B cell (primary cell): ENCODE measurements at regions of chr7 and their contacts with region 1.

Region 1: DNA sequence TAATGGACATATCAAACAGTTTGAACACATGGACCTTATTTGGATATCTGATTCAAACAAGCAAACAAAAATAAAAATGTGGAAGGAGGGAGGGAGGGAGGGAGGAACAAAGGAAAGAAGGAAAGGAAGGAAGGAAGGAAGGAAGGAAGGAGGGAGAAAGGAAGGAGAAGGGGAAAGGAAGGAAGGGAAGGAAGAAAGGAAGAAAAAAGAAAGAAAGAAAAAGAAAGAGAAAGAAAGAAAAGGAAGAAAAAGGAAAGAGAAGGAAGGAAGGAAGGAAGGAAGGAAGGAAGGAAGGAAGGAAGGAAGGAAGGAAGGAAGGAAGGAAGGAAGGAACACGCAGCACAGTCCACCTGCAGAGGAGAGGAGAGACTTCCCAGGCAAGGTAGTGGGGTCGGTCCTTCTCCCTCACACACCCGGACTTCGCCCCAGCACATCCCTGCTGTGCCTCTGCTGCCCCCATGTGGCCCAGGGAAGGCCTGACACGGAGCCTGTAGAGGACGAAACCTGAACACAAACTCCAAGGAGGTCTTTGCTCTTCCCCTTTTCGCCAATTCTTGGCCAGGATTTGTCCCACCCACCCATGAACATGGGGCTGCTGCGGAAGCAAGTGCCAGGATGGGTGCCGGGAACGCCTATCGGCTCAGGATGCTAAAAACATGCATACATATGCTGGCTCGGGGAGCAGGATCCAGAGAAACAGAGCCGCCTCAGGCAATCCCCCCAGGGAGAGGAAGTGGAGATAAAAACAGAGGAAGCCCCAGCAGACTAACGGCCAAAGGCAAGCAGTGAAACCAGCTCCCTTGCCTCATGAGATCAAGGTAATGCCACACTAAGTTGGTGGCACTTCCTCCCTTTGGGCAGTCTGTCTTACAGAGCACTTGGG is 52.3 kb upstream of the DGKI start:
- DNase-seq: peak; percentile 78
- ATAC-seq: peak; percentile 87
- H3K4me3 ChIP-seq: peak overlapping the region in 3 of 5 experiments; percentile 37 to 46 (median 45)
- H3K4me3 Mint-ChIP-seq: peak overlapping the region; percentile 81
- H3K27ac ChIP-seq: peak overlapping the region; percentile 34 to 59
- H3K27ac Mint-ChIP-seq: peak overlapping the region; percentile 83
- H3K4me1 ChIP-seq: peaks cover 14 to 18% of the 10 kb centered on the region in 2 donors
- H3K4me1 Mint-ChIP-seq: peaks cover 27% of the 10 kb centered on the region
- H3K27me3 ChIP-seq: no peaks in the 10 kb centered on the region
- H3K27me3 Mint-ChIP-seq: no peaks in the 10 kb centered on the region
- CTCF ChIP-seq: peak; percentile 92

Region 2: DNA sequence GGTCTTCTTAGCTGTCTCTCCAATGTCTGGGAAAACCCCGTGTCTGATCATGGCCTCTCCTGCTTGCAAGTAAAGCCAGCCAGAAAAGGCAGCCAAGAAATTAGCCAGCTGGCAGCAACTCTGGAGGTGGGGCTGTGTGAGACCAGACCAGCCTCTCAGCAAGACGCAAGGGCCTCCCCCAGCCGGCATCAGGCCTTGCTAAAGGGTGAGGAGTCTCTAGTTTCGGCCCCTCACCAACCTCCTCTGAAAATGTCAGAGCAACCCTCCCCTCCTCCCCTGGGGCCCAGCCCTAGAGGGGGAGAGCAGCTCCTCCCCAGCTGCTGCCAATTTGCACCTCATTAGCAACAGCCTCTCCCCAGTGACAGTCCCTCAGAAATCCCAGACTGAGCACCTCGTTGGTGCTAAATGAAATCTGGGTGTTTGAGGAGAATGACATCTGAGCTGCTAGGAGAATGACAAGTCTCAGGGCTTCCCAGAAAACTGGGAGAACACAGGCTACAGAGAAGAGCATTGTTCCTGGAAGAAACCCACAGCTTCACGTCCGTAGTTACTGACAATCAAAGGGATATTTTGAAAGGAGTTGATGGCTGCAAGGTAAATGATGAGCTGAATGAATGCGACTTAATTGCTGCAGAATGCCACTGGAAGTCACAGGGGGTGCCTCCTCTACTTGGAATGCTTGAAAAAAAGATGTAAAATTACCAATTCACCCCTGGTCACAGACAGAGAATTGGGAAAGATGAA is 78.2 kb before region 1 on chr7:
- CTCF ChIA-PET with region 1: no interaction called
- POLR2A ChIA-PET with region 1: no interaction called
- intact Hi-C with region 1: no loop called
- DNase-seq: no peak
- ATAC-seq: no peak
- H3K4me3 ChIP-seq: no peak overlapping the region
- H3K4me3 Mint-ChIP-seq: no peak overlapping the region
- H3K27ac ChIP-seq: no peak overlapping the region
- H3K27ac Mint-ChIP-seq: no peak overlapping the region
- H3K4me1 ChIP-seq: no peaks in the 10 kb centered on the region
- H3K4me1 Mint-ChIP-seq: no peaks in the 10 kb centered on the region
- H3K27me3 ChIP-seq: no peaks in the 10 kb centered on the region
- H3K27me3 Mint-ChIP-seq: peaks cover 13% of the 10 kb centered on the region
- CTCF ChIP-seq: no peak

Region 3: GRCh38 chr7:137985253-137985896 is 86.3 kb after region 1 on chr7:
- CTCF ChIA-PET with region 1: interaction called, 12 read pairs
- POLR2A ChIA-PET with region 1: no interaction called
- intact Hi-C with region 1: no loop called
- DNase-seq: peak; percentile 71
- ATAC-seq: peak; percentile 73
- H3K4me3 ChIP-seq: peak overlapping the region in 1 of 5 experiments; percentile 31
- H3K4me3 Mint-ChIP-seq: peak overlapping the region; percentile 58
- H3K27ac ChIP-seq: peak overlapping the region; percentile 89 to 94
- H3K27ac Mint-ChIP-seq: no peak overlapping the region
- H3K4me1 ChIP-seq: peaks cover 75 to 84% of the 10 kb centered on the region in 2 donors
- H3K4me1 Mint-ChIP-seq: peaks cover 30% of the 10 kb centered on the region
- H3K27me3 ChIP-seq: no peaks in the 10 kb centered on the region
- H3K27me3 Mint-ChIP-seq: no peaks in the 10 kb centered on the region
- CTCF ChIP-seq: no peak

Region 4: DNA sequence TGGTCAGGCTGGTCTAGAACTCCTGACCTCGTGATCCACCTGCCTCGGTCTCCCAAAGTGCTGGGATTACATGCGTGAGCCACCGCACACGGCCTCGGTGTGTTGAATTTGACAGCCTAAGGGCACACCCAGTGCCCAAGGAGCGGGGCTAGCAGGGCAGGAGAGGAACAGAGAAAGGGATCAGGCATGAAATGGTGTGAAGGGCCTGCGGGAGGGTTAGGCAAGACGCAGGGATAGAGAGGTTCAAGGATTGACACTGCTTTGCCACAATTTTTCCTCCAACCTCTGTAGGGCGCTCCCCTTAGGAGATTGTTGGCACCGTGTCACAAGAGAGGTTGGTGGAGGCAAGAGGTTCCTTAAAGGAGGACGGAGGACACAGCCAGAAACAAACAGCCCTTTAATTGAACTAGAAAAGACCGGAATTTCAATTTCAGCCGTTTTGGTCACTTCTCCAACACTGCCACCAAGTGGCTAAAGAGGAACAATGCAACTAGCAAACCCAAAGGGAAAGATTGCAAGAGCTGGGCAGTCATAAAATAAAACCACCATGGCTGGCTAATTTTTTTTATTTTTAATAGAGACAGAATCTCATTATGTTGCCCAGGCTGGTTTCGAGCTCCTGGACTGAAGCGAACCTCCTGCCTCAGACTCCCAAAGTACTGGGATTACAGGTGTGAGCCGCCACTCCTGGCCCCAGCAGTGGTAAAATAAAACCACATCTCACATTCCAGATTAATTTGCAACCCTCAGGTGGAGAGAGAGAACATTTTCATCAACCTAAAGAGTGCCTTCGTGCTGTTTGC is 109.7 kb after region 1 on chr7:
- CTCF ChIA-PET with region 1: interaction called, 385 read pairs
- POLR2A ChIA-PET with region 1: no interaction called
- intact Hi-C with region 1: loop called (anchors 1 kb)
- DNase-seq: peak; percentile 70
- ATAC-seq: peak; percentile 64
- H3K4me3 ChIP-seq: no peak overlapping the region
- H3K4me3 Mint-ChIP-seq: no peak overlapping the region
- H3K27ac ChIP-seq: no peak overlapping the region
- H3K27ac Mint-ChIP-seq: no peak overlapping the region
- H3K4me1 ChIP-seq: peaks cover 5 to 6% of the 10 kb centered on the region in 2 donors
- H3K4me1 Mint-ChIP-seq: peaks cover 4% of the 10 kb centered on the region
- H3K27me3 ChIP-seq: no peaks in the 10 kb centered on the region
- H3K27me3 Mint-ChIP-seq: peaks cover 3% of the 10 kb centered on the region
- CTCF ChIP-seq: peak; percentile 86

Region 5: GRCh38 chr7:138161600-138162081 is 262.6 kb after region 1 on chr7:
- CTCF ChIA-PET with region 1: interaction called, 6 read pairs
- POLR2A ChIA-PET with region 1: no interaction called
- intact Hi-C with region 1: loop called (anchors 1 kb)
- DNase-seq: peak; percentile 86
- ATAC-seq: peak; percentile 98
- H3K4me3 ChIP-seq: no peak overlapping the region
- H3K4me3 Mint-ChIP-seq: no peak overlapping the region
- H3K27ac ChIP-seq: no peak overlapping the region
- H3K27ac Mint-ChIP-seq: no peak overlapping the region
- H3K4me1 ChIP-seq: peaks cover 0 to 2% of the 10 kb centered on the region in 2 donors
- H3K4me1 Mint-ChIP-seq: no peaks in the 10 kb centered on the region
- H3K27me3 ChIP-seq: no peaks in the 10 kb centered on the region
- H3K27me3 Mint-ChIP-seq: no peaks in the 10 kb centered on the region
- CTCF ChIP-seq: peak; percentile 72

Region 6: DNA sequence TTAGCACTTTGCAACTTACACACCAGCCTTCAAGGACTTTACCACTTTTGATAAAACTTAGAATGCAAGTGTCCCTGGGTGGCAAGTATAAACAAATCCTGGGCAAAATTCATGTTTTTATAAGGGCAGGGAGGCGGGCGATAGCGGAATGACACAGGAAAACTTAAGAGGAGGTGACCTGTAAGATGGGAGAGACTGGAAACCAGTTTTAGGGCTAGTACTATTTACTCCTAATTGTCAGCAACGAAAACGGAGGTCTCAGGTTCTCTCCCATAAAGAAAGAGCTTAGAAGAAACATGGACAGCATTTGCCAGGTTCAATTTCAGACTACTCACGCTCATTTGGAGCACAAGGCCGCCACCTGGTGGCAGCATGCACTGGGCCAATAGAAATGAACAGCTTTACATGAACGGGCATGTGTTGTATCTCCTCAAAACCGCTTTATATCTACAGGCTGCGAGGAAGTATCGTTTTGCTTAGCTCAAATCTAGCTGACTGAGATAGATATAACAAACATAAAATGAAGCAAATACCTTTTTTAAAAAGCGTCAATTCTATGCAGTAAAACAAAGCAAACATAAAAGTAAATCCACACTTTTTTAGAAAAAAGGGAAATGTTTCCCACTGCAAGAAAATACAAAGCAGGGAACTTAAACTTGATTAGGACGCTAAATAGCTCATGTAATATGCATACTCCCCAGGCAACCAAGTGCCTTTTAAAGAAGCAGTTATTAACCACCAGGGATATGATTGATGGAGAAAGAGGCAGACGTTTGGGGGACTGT is 839.7 kb after region 1 on chr7:
- CTCF ChIA-PET with region 1: interaction called, 17 read pairs
- POLR2A ChIA-PET with region 1: no interaction called
- intact Hi-C with region 1: no loop called
- DNase-seq: peak; percentile 63
- ATAC-seq: no peak
- H3K4me3 ChIP-seq: no peak overlapping the region
- H3K4me3 Mint-ChIP-seq: no peak overlapping the region
- H3K27ac ChIP-seq: no peak overlapping the region
- H3K27ac Mint-ChIP-seq: no peak overlapping the region
- H3K4me1 ChIP-seq: no peaks in the 10 kb centered on the region
- H3K4me1 Mint-ChIP-seq: no peaks in the 10 kb centered on the region
- H3K27me3 ChIP-seq: no peaks in the 10 kb centered on the region
- H3K27me3 Mint-ChIP-seq: no peaks in the 10 kb centered on the region
- CTCF ChIP-seq: peak; percentile 69